BJ (cell line): ENCODE measurements at regions of chr16 and their contacts with region 1.

Region 1: GRCh38 chr16:84062734-84063640 is 20.4 kb upstream of the SLC38A8 start:
- DNase-seq: no peak
- H3K4me3 ChIP-seq: no peak overlapping the region
- H3K27me3 ChIP-seq: no peaks in the 10 kb centered on the region
- CTCF ChIP-seq: peak; percentile 93

Region 2: DNA sequence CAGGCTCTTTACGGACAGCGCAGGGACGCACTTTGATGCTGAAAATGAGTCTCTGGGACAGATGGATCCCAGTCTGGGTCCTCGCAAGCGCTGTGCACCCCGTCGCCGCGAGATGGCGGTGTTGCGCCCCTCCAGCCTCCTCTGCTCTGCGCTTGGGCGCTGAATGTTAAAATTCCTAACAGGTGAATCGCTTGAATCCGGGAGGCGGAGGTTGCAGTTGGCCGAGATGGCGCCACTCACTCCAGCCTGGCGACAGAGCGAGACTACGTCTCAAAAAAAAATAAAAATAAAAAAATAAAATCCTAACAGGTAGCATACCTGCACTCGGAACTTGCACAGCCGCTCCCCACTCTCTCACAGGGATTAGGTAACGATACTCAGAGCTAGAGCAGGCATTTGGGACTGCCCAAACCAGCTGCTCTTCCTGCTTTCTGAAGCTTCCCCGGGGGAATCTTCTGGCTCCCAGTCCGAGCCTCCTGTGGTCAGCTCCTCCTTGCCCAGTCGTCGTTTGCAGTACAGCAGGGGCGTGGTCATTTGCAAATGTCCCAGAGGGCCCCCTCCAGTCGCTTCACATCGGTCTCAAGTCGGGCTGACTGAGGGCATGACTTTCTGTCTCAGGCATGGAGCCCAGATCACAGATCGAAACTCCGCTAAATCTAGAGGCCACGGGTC is 136.1 kb before region 1 on chr16:
- CTCF ChIA-PET with region 1: interaction called, 34 read pairs
- POLR2A ChIA-PET with region 1: no interaction called
- DNase-seq: peak; percentile 7
- H3K4me3 ChIP-seq: no peak overlapping the region
- H3K27me3 ChIP-seq: no peaks in the 10 kb centered on the region
- CTCF ChIP-seq: peak; percentile 99

Region 3: GRCh38 chr16:83952940-83953795 is 109.8 kb before region 1 on chr16 and contains the start of gene OSGIN1:
- CTCF ChIA-PET with region 1: interaction called, 161 read pairs
- POLR2A ChIA-PET with region 1: no interaction called
- DNase-seq: peak; percentile 54
- H3K4me3 ChIP-seq: peak within 1 kb of the TSS; percentile 55
- H3K27me3 ChIP-seq: no peaks in the 10 kb centered on the region
- CTCF ChIP-seq: no peak
- polyA plus RNA-seq, gene OSGIN1: 2.0 and 5.1 TPM in 2 replicates

Region 4: GRCh38 chr16:83964684-83965443 is 98.1 kb before region 1 on chr16:
- CTCF ChIA-PET with region 1: interaction called, 161 read pairs
- POLR2A ChIA-PET with region 1: no interaction called
- DNase-seq: no peak
- H3K4me3 ChIP-seq: no peak overlapping the region
- H3K27me3 ChIP-seq: peaks cover 10% of the 10 kb centered on the region
- CTCF ChIP-seq: no peak

Region 5: GRCh38 chr16:84079664-84080063 is 16.7 kb after region 1 on chr16:
- CTCF ChIA-PET with region 1: interaction called, 11 read pairs
- POLR2A ChIA-PET with region 1: no interaction called
- DNase-seq: no peak
- H3K4me3 ChIP-seq: no peak overlapping the region
- H3K27me3 ChIP-seq: no peaks in the 10 kb centered on the region
- CTCF ChIP-seq: no peak

Region 6: DNA sequence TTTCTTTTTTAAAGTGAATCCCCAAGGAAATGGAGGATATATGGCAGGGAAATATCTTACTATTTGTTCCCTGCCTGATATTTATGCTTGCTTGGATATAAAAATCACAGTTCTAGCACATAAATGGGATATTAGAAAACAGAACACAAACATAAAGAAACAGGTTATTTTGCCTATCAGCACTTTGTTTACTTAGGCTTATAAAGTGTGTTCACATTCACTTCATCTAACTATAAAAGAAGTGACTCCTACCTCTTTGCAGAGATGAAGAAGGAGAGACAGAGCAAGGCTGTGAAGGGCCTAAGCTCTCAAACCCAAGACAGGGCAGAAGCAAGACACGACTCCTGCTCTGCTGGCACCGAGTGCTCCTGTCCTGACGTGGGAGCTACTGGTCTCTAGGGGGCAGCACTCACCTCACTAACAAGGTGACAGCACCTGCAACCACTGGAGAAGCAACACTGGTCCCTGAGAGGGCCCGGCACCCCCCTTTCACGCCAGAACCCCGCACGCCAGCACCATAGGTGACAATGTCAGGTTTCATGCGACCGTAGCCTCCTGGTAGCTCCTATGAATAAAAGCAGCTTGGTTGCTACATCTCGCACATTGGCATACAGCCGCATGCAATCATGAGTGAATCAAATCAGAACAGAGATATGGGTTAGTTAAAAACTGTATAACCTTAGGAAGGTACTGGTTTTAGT is 21.7 kb after region 1 on chr16:
- CTCF ChIA-PET with region 1: interaction called, 11 read pairs
- POLR2A ChIA-PET with region 1: no interaction called
- DNase-seq: no peak
- H3K4me3 ChIP-seq: no peak overlapping the region
- H3K27me3 ChIP-seq: no peaks in the 10 kb centered on the region
- CTCF ChIP-seq: peak; percentile 83